HEK293T (cell line): ENCODE measurements at regions of chr3 and their contacts with region 1.

Region 1: DNA sequence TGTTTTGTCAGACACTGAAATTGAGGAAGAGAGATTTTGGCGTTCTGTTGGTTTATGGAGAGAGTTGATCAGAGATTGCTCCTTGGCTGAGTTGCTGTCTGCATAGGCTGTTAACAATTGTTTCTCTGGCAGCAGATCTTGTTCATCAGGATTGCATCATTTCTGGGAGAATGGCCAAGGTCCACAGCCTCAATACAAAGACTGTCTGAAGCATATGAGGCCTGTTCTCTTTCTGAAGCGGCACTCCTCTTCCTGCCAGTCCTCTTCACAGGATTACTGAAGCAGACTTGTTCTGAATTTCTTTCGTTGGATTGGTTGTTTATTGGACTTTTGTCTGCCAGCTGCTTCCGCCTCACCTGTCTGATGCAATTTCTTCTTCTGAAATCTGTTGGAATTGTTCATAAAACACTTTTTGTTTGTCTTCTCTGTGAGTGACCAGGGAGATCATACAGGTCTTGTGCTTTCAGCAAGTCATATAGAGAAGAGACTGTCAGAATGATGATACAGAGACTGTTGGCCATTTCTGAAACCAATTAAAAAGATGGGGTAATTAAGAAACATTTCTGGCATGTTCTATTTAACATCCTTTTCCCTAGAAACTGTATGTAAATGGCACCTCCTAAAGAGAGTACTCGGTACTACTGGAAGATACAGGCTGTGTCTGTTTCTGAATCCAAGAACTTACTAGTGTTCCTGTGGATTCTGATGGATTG is 25.5 kb downstream of the SETD5 start:
- DNase-seq: peak; percentile 49

Region 2: DNA sequence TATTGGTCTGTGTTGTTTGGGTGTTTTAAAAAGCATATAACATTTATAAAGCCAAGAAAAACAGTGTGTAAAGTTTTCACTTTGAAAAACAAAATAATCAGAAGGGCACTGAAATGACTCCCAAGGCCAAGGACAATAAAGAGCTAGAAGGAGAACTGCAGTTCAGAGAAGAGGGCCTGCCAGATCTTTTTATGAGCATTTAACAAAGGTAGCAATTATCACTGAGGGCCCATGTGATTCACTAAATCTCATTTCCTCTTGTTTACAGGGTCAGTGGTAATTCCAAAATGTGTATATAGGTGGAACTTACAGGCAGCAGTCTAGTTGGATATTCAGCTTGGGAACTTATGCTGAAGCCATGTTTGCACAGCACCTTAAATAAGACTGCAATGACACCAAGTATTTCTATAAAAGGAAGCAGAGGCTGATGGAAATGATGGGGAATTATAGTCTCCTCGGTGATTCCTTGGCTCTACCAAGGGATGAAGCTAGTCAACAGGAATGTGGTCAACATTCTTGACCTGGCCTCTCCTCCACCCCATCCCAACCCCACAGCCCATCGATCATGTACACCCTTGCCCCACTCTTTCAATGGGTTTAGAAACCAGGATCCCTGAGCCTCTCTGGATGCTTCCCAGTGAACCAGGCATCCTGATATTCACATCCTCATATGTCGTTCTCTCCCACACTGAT is 114.4 kb before region 1 on chr3:
- CTCF ChIA-PET with region 1: no interaction called
- POLR2A ChIA-PET with region 1: no interaction called
- DNase-seq: no peak

Region 3: GRCh38 chr3:9402410-9403228 is 20.2 kb before region 1 on chr3:
- CTCF ChIA-PET with region 1: interaction called, 11 read pairs
- POLR2A ChIA-PET with region 1: interaction called, 46 read pairs
- DNase-seq: peak; percentile 48